Activated B cell treated with CpG ODN at 0.5 μM for 24 hours (primary cell): ENCODE measurements at regions of chr1 and their contacts with region 1.

Region 1: GRCh38 chr1:37474046-37474759 is at the start of gene ZC3H12A:
- DNase-seq: peak; percentile 98
- ATAC-seq: peak; percentile 65
- H3K4me3 Mint-ChIP-seq: peak within 1 kb of the TSS; percentile 99
- H3K27ac Mint-ChIP-seq: peak within 1 kb of the TSS; percentile 92
- H3K4me1 Mint-ChIP-seq: peaks cover 36% of the 10 kb centered on the region
- H3K27me3 Mint-ChIP-seq: peaks cover 6% of the 10 kb centered on the region
- CTCF ChIP-seq: no peak
- total RNA-seq, gene ZC3H12A: 140 and 145 TPM in 2 replicates

Region 2: DNA sequence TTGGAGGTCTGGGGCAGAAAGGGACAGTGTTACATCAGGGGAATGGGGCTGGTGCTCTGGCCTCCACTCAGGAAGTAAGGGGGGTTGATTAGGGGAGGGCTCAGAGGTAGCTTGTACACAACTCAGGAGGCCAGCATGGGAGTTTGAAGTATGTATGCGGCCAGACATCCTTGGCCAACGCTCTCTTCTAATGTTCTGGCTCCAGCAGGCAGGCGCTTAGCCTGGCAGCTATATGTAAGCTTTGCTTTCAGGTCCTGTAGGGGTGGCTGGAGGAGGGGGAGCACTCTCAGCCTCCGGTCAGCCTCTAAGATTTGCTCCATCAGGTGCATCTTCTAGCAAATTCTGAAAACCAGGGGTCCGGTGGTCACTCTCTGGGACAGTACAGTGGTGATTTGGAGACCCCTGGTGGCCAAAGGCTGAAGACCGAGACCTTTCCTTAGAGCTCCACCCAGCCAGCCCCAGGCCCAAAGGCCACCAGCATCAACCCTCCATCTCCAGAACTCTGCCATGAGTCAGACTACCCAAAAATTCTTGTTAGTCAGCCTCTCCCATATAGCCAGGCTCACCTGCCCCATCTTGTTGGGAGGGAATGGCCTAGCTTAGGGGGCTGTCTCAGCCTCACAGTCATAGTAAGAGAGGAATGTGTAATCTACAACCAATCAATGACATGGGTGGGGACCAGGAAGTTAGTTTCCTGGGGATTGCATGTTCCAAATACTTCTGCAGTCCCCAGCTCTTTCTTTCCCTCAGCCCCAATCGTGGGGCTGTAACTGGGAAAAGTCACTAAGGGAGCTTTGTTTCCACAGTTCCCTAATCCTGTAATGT is 1339.5 kb before region 1 on chr1:
- CTCF ChIA-PET with region 1: no interaction called
- POLR2A ChIA-PET with region 1: interaction called, 11 read pairs
- intact Hi-C with region 1: no loop called
- DNase-seq: no peak
- ATAC-seq: peak; percentile 67
- H3K4me3 Mint-ChIP-seq: no peak overlapping the region
- H3K27ac Mint-ChIP-seq: no peak overlapping the region
- H3K4me1 Mint-ChIP-seq: no peaks in the 10 kb centered on the region
- H3K27me3 Mint-ChIP-seq: no peaks in the 10 kb centered on the region
- CTCF ChIP-seq: no peak

Region 3: GRCh38 chr1:37071829-37072228 is 402.4 kb before region 1 on chr1:
- CTCF ChIA-PET with region 1: no interaction called
- POLR2A ChIA-PET with region 1: no interaction called
- intact Hi-C with region 1: no loop called
- DNase-seq: no peak
- ATAC-seq: no peak
- H3K4me3 Mint-ChIP-seq: no peak overlapping the region
- H3K27ac Mint-ChIP-seq: no peak overlapping the region
- H3K4me1 Mint-ChIP-seq: no peaks in the 10 kb centered on the region
- H3K27me3 Mint-ChIP-seq: peaks cover 21% of the 10 kb centered on the region
- CTCF ChIP-seq: no peak

Region 4: GRCh38 chr1:37449936-37450335 is 24.3 kb before region 1 on chr1:
- CTCF ChIA-PET with region 1: interaction called, 32 read pairs
- POLR2A ChIA-PET with region 1: interaction called, 15 read pairs
- intact Hi-C with region 1: loop called (anchors 2 kb)
- DNase-seq: no peak
- ATAC-seq: peak; percentile 63
- H3K4me3 Mint-ChIP-seq: no peak overlapping the region
- H3K27ac Mint-ChIP-seq: no peak overlapping the region
- H3K4me1 Mint-ChIP-seq: peaks cover 10% of the 10 kb centered on the region
- H3K27me3 Mint-ChIP-seq: peaks cover 8% of the 10 kb centered on the region
- CTCF ChIP-seq: no peak

Region 5: DNA sequence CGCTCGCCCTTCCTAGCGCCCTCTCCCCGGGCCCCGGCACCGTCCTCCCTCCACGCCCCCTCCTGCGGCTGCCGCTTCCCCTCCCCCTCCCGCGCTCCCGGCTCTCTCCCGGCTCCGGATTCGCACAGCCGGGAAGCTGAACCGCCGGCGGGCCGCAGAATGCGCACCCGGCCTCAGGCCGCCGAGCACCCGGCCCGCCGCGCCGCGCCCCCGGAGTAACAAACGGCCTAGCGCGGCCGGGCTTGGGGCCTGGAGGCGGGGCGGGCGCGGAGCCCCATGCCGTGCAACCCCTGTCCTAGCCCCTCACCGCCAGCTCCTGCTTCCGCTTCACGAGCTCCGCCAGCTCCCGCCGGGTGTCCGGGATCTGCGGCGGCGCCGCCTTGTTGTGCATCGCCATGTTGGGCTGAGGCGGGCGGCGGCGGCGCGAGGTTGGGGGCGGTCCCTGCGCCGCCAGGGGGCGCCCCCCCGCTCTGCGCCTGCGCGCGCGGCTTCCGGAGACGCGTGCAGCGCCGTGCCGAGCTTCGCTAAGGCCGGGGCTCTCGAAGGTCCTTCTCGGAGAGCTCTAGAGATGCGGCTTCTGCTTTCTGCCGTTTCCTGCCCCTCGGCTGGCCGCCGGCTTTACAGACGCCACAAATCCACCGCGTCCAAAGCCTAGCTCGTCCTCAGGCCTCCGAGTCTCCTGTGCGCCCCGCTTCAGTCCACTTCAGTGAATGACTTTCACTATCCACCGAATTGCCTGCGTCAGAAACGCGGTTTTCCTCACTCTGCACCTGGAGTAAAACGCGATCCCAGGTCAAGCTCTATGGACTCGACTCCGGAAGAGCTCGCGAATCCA is 40.4 kb after region 1 on chr1 and contains the start of gene MEAF6:
- CTCF ChIA-PET with region 1: interaction called, 6 read pairs
- POLR2A ChIA-PET with region 1: interaction called, 42 read pairs
- intact Hi-C with region 1: loop called (anchors 1 kb)
- DNase-seq: peak; percentile 93
- ATAC-seq: peak; percentile 95
- H3K4me3 Mint-ChIP-seq: peak within 1 kb of the TSS; percentile 96
- H3K27ac Mint-ChIP-seq: peak within 1 kb of the TSS; percentile 98
- H3K4me1 Mint-ChIP-seq: peaks cover 39% of the 10 kb centered on the region
- H3K27me3 Mint-ChIP-seq: no peaks in the 10 kb centered on the region
- CTCF ChIP-seq: no peak
- total RNA-seq, gene MEAF6: 59.9 and 66.5 TPM in 2 replicates

Region 6: GRCh38 chr1:37634244-37634991 is 160.2 kb after region 1 on chr1 and contains the start of gene RSPO1:
- CTCF ChIA-PET with region 1: no interaction called
- POLR2A ChIA-PET with region 1: no interaction called
- intact Hi-C with region 1: no loop called
- DNase-seq: no peak
- ATAC-seq: peak; percentile 28
- H3K4me3 Mint-ChIP-seq: no peak within 1 kb of the TSS
- H3K27ac Mint-ChIP-seq: no peak within 1 kb of the TSS
- H3K4me1 Mint-ChIP-seq: peaks cover 16% of the 10 kb centered on the region
- H3K27me3 Mint-ChIP-seq: peaks cover 68% of the 10 kb centered on the region
- CTCF ChIP-seq: no peak
- total RNA-seq, gene RSPO1: not detected in 2 replicates

Region 7: GRCh38 chr1:37807555-37808368 is 333.6 kb after region 1 on chr1 and contains the starts of genes C1orf122 and YRDC:
- CTCF ChIA-PET with region 1: no interaction called
- POLR2A ChIA-PET with region 1: interaction called, 7 read pairs
- intact Hi-C with region 1: loop called (anchors 10 kb)
- DNase-seq: peak; percentile 93
- ATAC-seq: peak; percentile 89
- H3K4me3 Mint-ChIP-seq: peak within 1 kb of the TSS; percentile 95
- H3K27ac Mint-ChIP-seq: peak within 1 kb of the TSS; percentile 92
- H3K4me1 Mint-ChIP-seq: peaks cover 45% of the 10 kb centered on the region
- H3K27me3 Mint-ChIP-seq: no peaks in the 10 kb centered on the region
- CTCF ChIP-seq: no peak
- total RNA-seq, gene C1orf122: 18.8 and 19.9 TPM in 2 replicates
- total RNA-seq, gene YRDC: 20.6 and 24.2 TPM in 2 replicates

Region 8: GRCh38 chr1:37853157-37853556 is 379.0 kb after region 1 on chr1:
- CTCF ChIA-PET with region 1: no interaction called
- POLR2A ChIA-PET with region 1: no interaction called
- intact Hi-C with region 1: no loop called
- DNase-seq: no peak
- ATAC-seq: no peak
- H3K4me3 Mint-ChIP-seq: no peak overlapping the region
- H3K27ac Mint-ChIP-seq: peak overlapping the region; percentile 55
- H3K4me1 Mint-ChIP-seq: peaks cover 39% of the 10 kb centered on the region
- H3K27me3 Mint-ChIP-seq: no peaks in the 10 kb centered on the region
- CTCF ChIP-seq: no peak